ENCODE measurements at regions of chr19 and their contacts with region 1.

Region 1: GRCh38 chr19:8355631-8356402 is 8.1 kb upstream of the ANGPTL4 start:
- DNase-seq: no peak
- ATAC-seq: no peak
- H3K4me3 Mint-ChIP-seq: no peak overlapping the region
- H3K27ac Mint-ChIP-seq: no peak overlapping the region
- H3K4me1 Mint-ChIP-seq: peaks cover 11% of the 10 kb centered on the region
- H3K27me3 Mint-ChIP-seq: peaks cover 13% of the 10 kb centered on the region

Region 2: GRCh38 chr19:8334458-8335342 is 21.1 kb before region 1 on chr19:
- CTCF ChIA-PET with region 1: interaction called, 29 read pairs
- DNase-seq: peak; percentile 58
- ATAC-seq: peak; percentile 73
- H3K4me3 Mint-ChIP-seq: no peak overlapping the region
- H3K27ac Mint-ChIP-seq: no peak overlapping the region
- H3K4me1 Mint-ChIP-seq: peaks cover 10% of the 10 kb centered on the region
- H3K27me3 Mint-ChIP-seq: peaks cover 36% of the 10 kb centered on the region

Region 3: DNA sequence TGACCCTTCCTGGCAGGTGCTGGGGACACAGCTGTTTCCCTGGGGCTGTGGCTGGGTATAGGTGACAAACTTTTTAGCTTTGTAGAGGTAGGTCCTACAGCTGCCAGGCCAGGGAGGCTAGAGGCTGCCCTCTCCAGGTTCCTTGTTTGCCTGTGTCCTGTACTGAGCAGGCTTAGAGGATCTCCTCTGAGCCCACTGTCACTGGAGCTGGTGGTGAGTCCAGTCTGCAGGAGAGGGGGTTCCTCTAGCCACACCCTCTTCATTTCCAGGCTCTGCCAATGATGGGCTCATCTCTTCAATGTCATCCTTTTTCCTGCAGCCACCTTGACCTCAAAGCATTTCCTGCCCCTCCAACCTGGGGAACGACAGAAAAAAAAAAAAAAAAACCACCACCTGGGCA is 21.8 kb after region 1 on chr19:
- CTCF ChIA-PET with region 1: interaction called, 12 read pairs
- DNase-seq: no peak
- ATAC-seq: no peak
- H3K4me3 Mint-ChIP-seq: no peak overlapping the region
- H3K27ac Mint-ChIP-seq: no peak overlapping the region
- H3K4me1 Mint-ChIP-seq: peaks cover 9% of the 10 kb centered on the region
- H3K27me3 Mint-ChIP-seq: no peaks in the 10 kb centered on the region

Region 4: GRCh38 chr19:8396563-8397203 is 40.9 kb after region 1 on chr19:
- CTCF ChIA-PET with region 1: interaction called, 38 read pairs
- DNase-seq: peak; percentile 92
- ATAC-seq: peak; percentile 93
- H3K4me3 Mint-ChIP-seq: no peak overlapping the region
- H3K27ac Mint-ChIP-seq: peak overlapping the region; percentile 66
- H3K4me1 Mint-ChIP-seq: peaks cover 27% of the 10 kb centered on the region
- H3K27me3 Mint-ChIP-seq: no peaks in the 10 kb centered on the region

Region 5: GRCh38 chr19:8444645-8445487 is 89.0 kb after region 1 on chr19 and contains the start of gene HNRNPM:
- CTCF ChIA-PET with region 1: interaction called, 10 read pairs
- DNase-seq: peak; percentile 100
- ATAC-seq: peak; percentile 95
- H3K4me3 Mint-ChIP-seq: peak within 1 kb of the TSS; percentile 86
- H3K27ac Mint-ChIP-seq: peak within 1 kb of the TSS; percentile 98
- H3K4me1 Mint-ChIP-seq: peaks cover 36% of the 10 kb centered on the region
- H3K27me3 Mint-ChIP-seq: no peaks in the 10 kb centered on the region
- total RNA-seq, gene HNRNPM: 226 to 309 TPM

Region 6: GRCh38 chr19:8569066-8569771 is 213.4 kb after region 1 on chr19:
- CTCF ChIA-PET with region 1: no interaction called
- DNase-seq: peak; percentile 94
- ATAC-seq: peak; percentile 81
- H3K4me3 Mint-ChIP-seq: peak overlapping the region; percentile 67
- H3K27ac Mint-ChIP-seq: peak overlapping the region; percentile 97
- H3K4me1 Mint-ChIP-seq: peaks cover 81% of the 10 kb centered on the region
- H3K27me3 Mint-ChIP-seq: no peaks in the 10 kb centered on the region